Naive thymus-derived CD4-positive, alpha-beta T cell (primary cell): ENCODE measurements at regions of chr2 and their contacts with region 1.

Region 1: GRCh38 chr2:73233154-73233931 is at the start of gene PRADC1:
- DNase-seq: peak; percentile 73 to 95 (median 91)
- ATAC-seq: peak; percentile 89
- H3K4me3 ChIP-seq: peak within 1 kb of the TSS; percentile 90
- H3K4me3 Mint-ChIP-seq: peak within 1 kb of the TSS; percentile 88 to 100 (median 98)
- H3K27ac ChIP-seq: peak within 1 kb of the TSS; percentile 94
- H3K27ac Mint-ChIP-seq: peak within 1 kb of the TSS; percentile 77 to 96 (median 94)
- H3K4me1 ChIP-seq: peaks cover 15% of the 10 kb centered on the region in 2 donors
- H3K4me1 Mint-ChIP-seq: peaks cover 25 to 41% (median 37%) of the 10 kb centered on the region in 7 donors
- H3K27me3 ChIP-seq: no peaks in the 10 kb centered on the region
- H3K27me3 Mint-ChIP-seq: peaks cover 0 to 2% (median 0%) of the 10 kb centered on the region in 5 donors
- total RNA-seq, gene PRADC1: 4.3 to 8.8 (median 6.9) TPM

Region 2: GRCh38 chr2:72825241-72826155 is 407.8 kb before region 1 on chr2 and contains the start of gene EXOC6B:
- CTCF ChIA-PET with region 1: no interaction called
- POLR2A ChIA-PET with region 1: no interaction called
- intact Hi-C with region 1: loop called in 1 of 2 experiments (anchors 1 kb)
- DNase-seq: peak; percentile 78 to 87 (median 84)
- ATAC-seq: peak; percentile 96
- H3K4me3 ChIP-seq: peak within 1 kb of the TSS; percentile 70
- H3K4me3 Mint-ChIP-seq: peak within 1 kb of the TSS; percentile 88 to 99 (median 98)
- H3K27ac ChIP-seq: peak within 1 kb of the TSS; percentile 69
- H3K27ac Mint-ChIP-seq: peak within 1 kb of the TSS; percentile 70 to 96 (median 92)
- H3K4me1 ChIP-seq: peaks cover 14 to 19% of the 10 kb centered on the region in 2 donors
- H3K4me1 Mint-ChIP-seq: peaks cover 24 to 48% (median 45%) of the 10 kb centered on the region in 7 donors
- H3K27me3 ChIP-seq: no peaks in the 10 kb centered on the region
- H3K27me3 Mint-ChIP-seq: peaks cover 0 to 12% (median 5%) of the 10 kb centered on the region in 5 donors
- total RNA-seq, gene EXOC6B: 14.3 to 21.9 (median 18.0) TPM

Region 3: DNA sequence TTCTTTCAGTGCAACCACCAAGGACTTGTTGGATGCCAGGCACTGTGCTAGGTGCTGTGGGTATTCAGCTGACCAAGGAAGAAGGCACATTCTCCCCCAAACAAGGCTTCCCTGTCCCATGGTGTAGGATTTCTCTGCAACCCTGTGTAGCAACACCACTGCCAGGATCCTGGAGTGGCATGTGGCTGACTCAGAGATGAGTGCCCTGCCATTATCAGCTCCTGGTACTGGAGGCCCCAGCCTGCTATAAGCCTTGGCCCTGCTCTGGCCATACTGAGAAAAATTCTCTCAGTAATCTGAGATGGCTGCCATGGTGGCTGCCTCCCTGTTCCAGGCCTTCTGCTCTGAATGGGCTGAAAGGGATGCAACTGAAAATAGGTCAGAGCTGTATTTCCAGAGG is 15.0 kb before region 1 on chr2:
- CTCF ChIA-PET with region 1: interaction called, 6 read pairs
- POLR2A ChIA-PET with region 1: interaction called, 34 read pairs
- intact Hi-C with region 1: loop called (anchors 1 kb)
- DNase-seq: no peak
- ATAC-seq: no peak
- H3K4me3 ChIP-seq: no peak overlapping the region
- H3K4me3 Mint-ChIP-seq: no peak overlapping the region
- H3K27ac ChIP-seq: no peak overlapping the region
- H3K27ac Mint-ChIP-seq: no peak overlapping the region
- H3K4me1 ChIP-seq: peaks cover 5 to 7% of the 10 kb centered on the region in 2 donors
- H3K4me1 Mint-ChIP-seq: peaks cover 14 to 33% (median 26%) of the 10 kb centered on the region in 7 donors
- H3K27me3 ChIP-seq: no peaks in the 10 kb centered on the region
- H3K27me3 Mint-ChIP-seq: no peaks in the 10 kb centered on the region

Region 4: DNA sequence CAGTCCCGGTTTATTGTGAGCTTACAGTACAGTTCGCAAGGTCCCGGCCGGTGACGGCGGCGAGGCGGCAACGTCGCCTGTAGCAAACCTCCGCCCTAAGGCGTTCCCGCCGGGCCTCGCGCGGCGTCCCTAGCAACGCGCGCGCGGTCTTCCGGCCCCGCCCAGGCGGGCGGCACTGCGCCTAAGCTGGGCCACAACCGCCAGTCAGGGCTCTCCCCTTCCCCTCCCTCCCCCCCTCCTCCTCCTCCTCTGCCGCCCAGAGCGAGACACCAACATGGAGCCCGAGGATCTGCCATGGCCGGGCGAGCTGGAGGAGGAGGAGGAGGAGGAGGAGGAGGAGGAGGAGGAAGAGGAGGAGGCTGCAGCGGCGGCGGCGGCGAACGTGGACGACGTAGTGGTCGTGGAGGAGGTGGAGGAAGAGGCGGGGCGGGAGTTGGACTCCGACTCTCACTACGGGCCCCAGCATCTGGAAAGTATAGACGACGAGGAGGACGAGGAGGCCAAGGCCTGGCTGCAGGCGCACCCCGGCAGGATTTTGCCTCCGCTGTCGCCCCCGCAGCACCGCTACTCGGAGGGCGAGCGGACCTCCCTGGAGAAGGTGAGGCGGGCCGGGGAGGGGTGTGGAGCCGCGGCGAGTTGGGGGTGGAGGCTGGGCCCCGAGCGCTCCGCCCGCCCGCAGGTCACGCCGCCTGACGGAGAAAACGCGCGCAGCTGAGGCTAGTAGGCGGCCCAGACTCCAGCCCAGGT is 152.4 kb after region 1 on chr2 and contains the start of gene ALMS1:
- CTCF ChIA-PET with region 1: no interaction called
- POLR2A ChIA-PET with region 1: interaction called, 18 read pairs
- intact Hi-C with region 1: loop called (anchors 1 kb)
- DNase-seq: peak; percentile 80 to 91 (median 87)
- ATAC-seq: peak; percentile 94
- H3K4me3 ChIP-seq: peak within 1 kb of the TSS; percentile 85
- H3K4me3 Mint-ChIP-seq: peak within 1 kb of the TSS; percentile 81 to 96 (median 90)
- H3K27ac ChIP-seq: peak within 1 kb of the TSS; percentile 92
- H3K27ac Mint-ChIP-seq: peak within 1 kb of the TSS; percentile 93 to 98 (median 96)
- H3K4me1 ChIP-seq: peaks cover 4 to 18% of the 10 kb centered on the region in 2 donors
- H3K4me1 Mint-ChIP-seq: peaks cover 23 to 47% (median 44%) of the 10 kb centered on the region in 7 donors
- H3K27me3 ChIP-seq: no peaks in the 10 kb centered on the region
- H3K27me3 Mint-ChIP-seq: peaks cover 0 to 23% (median 0%) of the 10 kb centered on the region in 5 donors
- total RNA-seq, gene ALMS1: 16.3 to 46.7 (median 23.5) TPM

Region 5: DNA sequence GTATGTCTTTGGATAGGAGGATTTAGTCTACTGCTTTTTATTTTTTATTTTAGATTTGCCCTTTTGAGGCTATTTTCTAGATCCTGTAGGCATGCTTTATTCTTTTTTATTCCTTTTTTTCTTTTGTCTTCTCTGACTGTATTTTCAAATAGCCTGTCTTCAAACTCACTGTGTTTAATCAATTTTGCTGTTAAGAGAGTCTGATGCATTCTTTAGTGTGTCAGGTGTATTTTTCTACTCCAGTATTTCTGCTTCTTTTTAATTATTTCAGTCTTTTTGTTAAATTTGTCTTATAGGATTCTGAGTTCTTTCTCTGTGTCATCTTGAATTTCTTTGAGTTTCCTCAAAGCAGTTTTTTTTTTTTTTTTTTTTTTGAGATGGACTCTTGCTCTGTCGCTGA is 295.3 kb after region 1 on chr2:
- CTCF ChIA-PET with region 1: no interaction called
- POLR2A ChIA-PET with region 1: no interaction called
- intact Hi-C with region 1: no loop called
- DNase-seq: no peak
- ATAC-seq: no peak
- H3K4me3 ChIP-seq: no peak overlapping the region
- H3K4me3 Mint-ChIP-seq: no peak overlapping the region
- H3K27ac ChIP-seq: no peak overlapping the region
- H3K27ac Mint-ChIP-seq: no peak overlapping the region
- H3K4me1 ChIP-seq: no peaks in the 10 kb centered on the region
- H3K4me1 Mint-ChIP-seq: no peaks in the 10 kb centered on the region
- H3K27me3 ChIP-seq: no peaks in the 10 kb centered on the region
- H3K27me3 Mint-ChIP-seq: no peaks in the 10 kb centered on the region

Region 6: GRCh38 chr2:73979686-73980085 is 746.3 kb after region 1 on chr2:
- CTCF ChIA-PET with region 1: no interaction called
- POLR2A ChIA-PET with region 1: no interaction called
- intact Hi-C with region 1: no loop called
- DNase-seq: no peak
- ATAC-seq: peak; percentile 13
- H3K4me3 ChIP-seq: peak overlapping the region; percentile 43
- H3K4me3 Mint-ChIP-seq: peak overlapping the region; percentile 48 to 80 (median 75)
- H3K27ac ChIP-seq: peak overlapping the region; percentile 63
- H3K27ac Mint-ChIP-seq: peak overlapping the region in 8 of 9 donors; percentile 81 to 96 (median 90)
- H3K4me1 ChIP-seq: peaks cover 33 to 58% of the 10 kb centered on the region in 2 donors
- H3K4me1 Mint-ChIP-seq: peaks cover 58 to 92% (median 84%) of the 10 kb centered on the region in 7 donors
- H3K27me3 ChIP-seq: no peaks in the 10 kb centered on the region
- H3K27me3 Mint-ChIP-seq: peaks cover 0 to 28% (median 0%) of the 10 kb centered on the region in 5 donors

Region 7: DNA sequence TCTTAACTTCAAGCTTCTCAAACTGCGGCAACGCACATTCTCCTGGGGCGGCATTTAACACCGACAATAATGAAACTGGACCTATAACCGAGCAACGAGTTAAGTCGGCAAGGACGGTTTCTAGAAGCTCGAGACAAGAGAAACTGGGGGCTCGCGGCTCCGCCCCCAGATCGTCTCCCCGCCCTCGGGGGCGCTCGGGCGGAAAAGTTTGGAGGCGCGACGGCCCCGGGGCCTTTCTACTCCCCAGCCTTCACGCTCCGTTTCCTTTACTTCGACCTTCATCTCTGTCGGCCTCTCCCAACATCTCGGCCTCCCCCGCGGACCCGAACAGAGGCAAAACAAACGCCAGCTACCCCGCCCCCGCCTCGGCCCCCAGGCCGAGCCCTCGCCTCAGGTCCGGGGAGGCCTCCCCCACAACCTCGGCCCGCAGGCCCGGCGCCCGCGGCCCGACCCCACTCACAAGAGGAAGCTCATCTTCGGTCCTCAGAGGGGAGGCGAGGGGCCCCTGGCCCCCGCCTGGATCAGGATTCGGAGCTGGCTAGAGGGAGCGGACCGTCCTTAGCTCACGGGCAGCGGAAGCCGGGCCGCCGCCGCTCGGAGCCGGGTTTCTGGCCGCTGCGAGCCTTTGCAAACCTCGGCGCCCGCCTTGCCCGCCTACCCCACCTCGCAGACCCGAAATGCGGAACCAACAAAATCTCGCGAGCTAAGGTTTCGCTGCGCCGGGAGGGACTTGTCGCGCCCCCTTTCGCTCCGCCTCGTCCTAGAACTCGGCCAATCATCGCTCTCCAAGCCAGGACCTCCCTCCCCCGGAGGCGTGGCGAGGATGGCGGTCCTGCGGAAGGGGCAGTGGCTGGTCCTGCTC is 945.1 kb after region 1 on chr2 and contains the start of gene MOB1A:
- CTCF ChIA-PET with region 1: no interaction called
- POLR2A ChIA-PET with region 1: no interaction called
- intact Hi-C with region 1: loop called in 1 of 2 experiments (anchors 10 kb)
- DNase-seq: peak; percentile 94 to 98 (median 97)
- ATAC-seq: peak; percentile 97
- H3K4me3 ChIP-seq: peak within 1 kb of the TSS; percentile 89
- H3K4me3 Mint-ChIP-seq: peak within 1 kb of the TSS; percentile 86 to 95 (median 91)
- H3K27ac ChIP-seq: peak within 1 kb of the TSS; percentile 97
- H3K27ac Mint-ChIP-seq: peak within 1 kb of the TSS; percentile 82 to 95 (median 90)
- H3K4me1 ChIP-seq: peaks cover 25 to 37% of the 10 kb centered on the region in 2 donors
- H3K4me1 Mint-ChIP-seq: peaks cover 32 to 46% (median 35%) of the 10 kb centered on the region in 7 donors
- H3K27me3 ChIP-seq: no peaks in the 10 kb centered on the region
- H3K27me3 Mint-ChIP-seq: no peaks in the 10 kb centered on the region
- total RNA-seq, gene MOB1A: 113 to 185 (median 140) TPM

Region 8: GRCh38 chr2:74653985-74654882 is 1420.9 kb after region 1 on chr2 and contains the start of gene SEMA4F:
- CTCF ChIA-PET with region 1: no interaction called
- POLR2A ChIA-PET with region 1: no interaction called
- intact Hi-C with region 1: loop called in 1 of 2 experiments (anchors 10 kb)
- DNase-seq: peak; percentile 85 to 95 (median 92)
- ATAC-seq: peak; percentile 100
- H3K4me3 ChIP-seq: peak within 1 kb of the TSS; percentile 86
- H3K4me3 Mint-ChIP-seq: peak within 1 kb of the TSS; percentile 82 to 97 (median 90)
- H3K27ac ChIP-seq: peak within 1 kb of the TSS; percentile 75
- H3K27ac Mint-ChIP-seq: peak within 1 kb of the TSS in 8 of 9 donors; percentile 59 to 96 (median 85)
- H3K4me1 ChIP-seq: peaks cover 6 to 8% of the 10 kb centered on the region in 2 donors
- H3K4me1 Mint-ChIP-seq: peaks cover 12 to 34% (median 23%) of the 10 kb centered on the region in 7 donors
- H3K27me3 ChIP-seq: no peaks in the 10 kb centered on the region
- H3K27me3 Mint-ChIP-seq: peaks cover 3 to 21% (median 5%) of the 10 kb centered on the region in 5 donors
- total RNA-seq, gene SEMA4F: 5.7 to 23.6 (median 11.0) TPM